CD8-positive, alpha-beta T cell (primary cell): ENCODE measurements at regions of chr6 and their contacts with region 1.

Region 1: GRCh38 chr6:152948150-152948768 is 34.6 kb downstream of the FBXO5 start:
- DNase-seq: peak in 2 of 9 experiments; percentile 44 to 56
- ATAC-seq: peak; percentile 52
- H3K4me3 ChIP-seq: no peak overlapping the region
- H3K4me3 Mint-ChIP-seq: no peak overlapping the region
- H3K27ac ChIP-seq: no peak overlapping the region
- H3K27ac Mint-ChIP-seq: no peak overlapping the region
- H3K4me1 ChIP-seq: no peaks in the 10 kb centered on the region
- H3K4me1 Mint-ChIP-seq: peaks cover 7% of the 10 kb centered on the region
- H3K27me3 ChIP-seq: peaks cover 0 to 9% of the 10 kb centered on the region in 2 experiments
- H3K27me3 Mint-ChIP-seq: peaks cover 23% of the 10 kb centered on the region
- CTCF ChIP-seq: peak; percentile 63

Region 2: GRCh38 chr6:151675746-151676416 is 1272.4 kb before region 1 on chr6:
- CTCF ChIA-PET with region 1: no interaction called
- POLR2A ChIA-PET with region 1: no interaction called
- intact Hi-C with region 1: loop called in 1 of 2 experiments (anchors 10 kb)
- DNase-seq: peak; percentile 2 to 68 (median 29)
- ATAC-seq: peak; percentile 75
- H3K4me3 ChIP-seq: no peak overlapping the region
- H3K4me3 Mint-ChIP-seq: no peak overlapping the region
- H3K27ac ChIP-seq: no peak overlapping the region
- H3K27ac Mint-ChIP-seq: no peak overlapping the region
- H3K4me1 ChIP-seq: no peaks in the 10 kb centered on the region
- H3K4me1 Mint-ChIP-seq: no peaks in the 10 kb centered on the region
- H3K27me3 ChIP-seq: no peaks in the 10 kb centered on the region
- H3K27me3 Mint-ChIP-seq: peaks cover 2% of the 10 kb centered on the region
- CTCF ChIP-seq: peak; percentile 80

Region 3: DNA sequence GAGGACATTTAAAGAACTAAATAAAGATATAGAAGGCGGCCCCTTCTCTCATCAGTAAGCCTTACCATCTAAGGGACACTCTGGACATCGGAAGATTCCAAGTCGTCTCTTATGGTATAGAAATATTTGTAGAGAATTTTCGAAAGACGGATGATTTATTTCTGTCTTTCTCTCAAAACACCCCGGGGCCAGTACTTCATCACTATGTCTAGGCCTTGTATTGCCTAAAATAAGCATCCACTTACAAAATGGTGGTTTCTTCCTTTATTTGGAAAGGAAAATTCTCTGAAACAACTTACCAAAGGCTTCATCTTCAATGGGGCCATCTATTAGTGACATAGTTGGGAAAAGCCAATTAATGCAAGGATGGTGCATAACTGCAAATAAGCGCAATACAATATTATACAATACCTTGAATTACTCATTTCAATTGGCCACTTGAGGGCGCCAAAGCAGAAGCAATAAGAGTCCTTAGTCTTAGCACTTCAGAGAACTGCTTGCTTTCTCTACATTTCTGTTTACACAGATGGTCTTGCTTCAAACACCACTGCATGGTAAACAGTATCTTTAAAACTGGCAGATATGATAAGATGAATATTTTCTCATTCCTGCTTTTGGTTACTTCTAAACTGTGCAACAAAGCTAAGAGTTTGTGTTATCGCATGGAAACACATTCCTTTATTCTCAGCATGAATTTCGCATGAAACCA is 84.5 kb before region 1 on chr6:
- CTCF ChIA-PET with region 1: interaction called, 3 read pairs
- POLR2A ChIA-PET with region 1: no interaction called
- intact Hi-C with region 1: loop called (anchors 2 kb)
- DNase-seq: peak; percentile 10 to 74 (median 67)
- ATAC-seq: peak; percentile 57
- H3K4me3 ChIP-seq: no peak overlapping the region
- H3K4me3 Mint-ChIP-seq: no peak overlapping the region
- H3K27ac ChIP-seq: no peak overlapping the region
- H3K27ac Mint-ChIP-seq: no peak overlapping the region
- H3K4me1 ChIP-seq: no peaks in the 10 kb centered on the region
- H3K4me1 Mint-ChIP-seq: no peaks in the 10 kb centered on the region
- H3K27me3 ChIP-seq: no peaks in the 10 kb centered on the region
- H3K27me3 Mint-ChIP-seq: peaks cover 6% of the 10 kb centered on the region
- CTCF ChIP-seq: peak; percentile 70